PC-9 (cell line): ENCODE measurements at regions of chr3 and their contacts with region 1.

Region 1: GRCh38 chr3:111668912-111669488 is 73.9 kb upstream of the ZBED2 start:
- DNase-seq: peak; percentile 16 to 78
- H3K4me3 ChIP-seq: no peak overlapping the region
- H3K27ac ChIP-seq: no peak overlapping the region
- H3K4me1 ChIP-seq: peaks cover 25% of the 10 kb centered on the region
- H3K27me3 ChIP-seq: no peaks in the 10 kb centered on the region
- CTCF ChIP-seq: peak; percentile 98

Region 2: DNA sequence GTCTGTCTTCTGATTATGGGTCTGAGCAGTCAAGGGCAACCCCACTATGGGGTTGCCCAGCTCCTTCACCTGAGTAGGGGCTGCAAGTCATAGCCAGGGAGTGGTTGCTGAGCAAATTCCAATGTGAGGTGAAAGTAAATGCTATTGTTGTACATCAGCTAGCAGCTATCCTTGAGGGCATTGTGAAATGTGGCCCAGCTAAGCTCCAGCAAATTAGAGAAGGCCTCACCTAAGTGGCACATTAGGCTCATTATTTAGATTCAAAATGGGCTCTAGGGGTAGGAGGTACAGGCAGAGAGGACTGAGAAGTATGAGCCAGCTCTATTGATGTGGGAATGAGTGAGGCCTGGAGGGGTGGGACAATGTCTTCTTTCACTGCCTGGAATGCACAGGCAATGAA is 228.8 kb before region 1 on chr3:
- CTCF ChIA-PET with region 1: no interaction called
- POLR2A ChIA-PET with region 1: no interaction called
- intact Hi-C with region 1: no loop called
- DNase-seq: no peak
- H3K4me3 ChIP-seq: no peak overlapping the region
- H3K27ac ChIP-seq: no peak overlapping the region
- H3K4me1 ChIP-seq: no peaks in the 10 kb centered on the region
- H3K27me3 ChIP-seq: no peaks in the 10 kb centered on the region
- CTCF ChIP-seq: no peak

Region 3: GRCh38 chr3:111577794-111578685 is 91.0 kb before region 1 on chr3:
- CTCF ChIA-PET with region 1: interaction called, 21 read pairs
- POLR2A ChIA-PET with region 1: no interaction called
- intact Hi-C with region 1: loop called (anchors 1 kb)
- DNase-seq: peak; percentile 40 to 79
- H3K4me3 ChIP-seq: no peak overlapping the region
- H3K27ac ChIP-seq: no peak overlapping the region
- H3K4me1 ChIP-seq: peaks cover 12% of the 10 kb centered on the region
- H3K27me3 ChIP-seq: no peaks in the 10 kb centered on the region
- CTCF ChIP-seq: peak; percentile 80

Region 4: DNA sequence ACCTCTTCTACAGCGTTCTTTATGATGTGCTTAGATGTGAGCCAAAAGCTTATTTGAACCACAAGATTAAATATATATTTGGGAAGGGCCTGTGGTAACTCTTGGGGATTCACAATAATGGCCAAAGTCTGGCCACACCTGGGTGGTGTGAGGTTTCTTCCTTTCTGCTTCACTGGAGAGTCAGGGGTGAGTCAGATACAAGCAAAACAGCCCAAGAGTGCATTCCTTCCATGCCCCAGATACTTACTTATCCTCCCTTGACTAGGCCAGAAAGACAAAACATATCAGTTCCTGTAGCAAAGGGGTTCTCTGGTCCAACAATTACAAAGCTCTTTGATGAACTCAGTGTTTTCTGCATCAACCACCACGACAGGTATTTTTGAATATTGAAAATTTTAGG is 74.8 kb before region 1 on chr3:
- CTCF ChIA-PET with region 1: interaction called, 11 read pairs
- POLR2A ChIA-PET with region 1: interaction called, 8 read pairs
- intact Hi-C with region 1: no loop called
- DNase-seq: peak; percentile 74 to 92
- H3K4me3 ChIP-seq: no peak overlapping the region
- H3K27ac ChIP-seq: peak overlapping the region; percentile 57
- H3K4me1 ChIP-seq: peaks cover 28% of the 10 kb centered on the region
- H3K27me3 ChIP-seq: no peaks in the 10 kb centered on the region
- CTCF ChIP-seq: no peak

Region 5: GRCh38 chr3:111691293-111691909 is 22.4 kb after region 1 on chr3:
- CTCF ChIA-PET with region 1: interaction called, 19 read pairs
- POLR2A ChIA-PET with region 1: no interaction called
- intact Hi-C with region 1: loop called (anchors 1 kb)
- DNase-seq: peak in 1 of 2 experiments; percentile 60
- H3K4me3 ChIP-seq: no peak overlapping the region
- H3K27ac ChIP-seq: no peak overlapping the region
- H3K4me1 ChIP-seq: peaks cover 37% of the 10 kb centered on the region
- H3K27me3 ChIP-seq: no peaks in the 10 kb centered on the region
- CTCF ChIP-seq: peak; percentile 80